SK-MEL-5 (cell line): ENCODE measurements at regions of chr10 and their contacts with region 1.

Region 1: GRCh38 chr10:72124989-72125388 is 36.6 kb upstream of the SPOCK2 start:
- DNase-seq: no peak

Region 2: GRCh38 chr10:71939861-71940474 is 185.0 kb before region 1 on chr10:
- in situ Hi-C with region 1: no loop called
- DNase-seq: no peak

Region 3: DNA sequence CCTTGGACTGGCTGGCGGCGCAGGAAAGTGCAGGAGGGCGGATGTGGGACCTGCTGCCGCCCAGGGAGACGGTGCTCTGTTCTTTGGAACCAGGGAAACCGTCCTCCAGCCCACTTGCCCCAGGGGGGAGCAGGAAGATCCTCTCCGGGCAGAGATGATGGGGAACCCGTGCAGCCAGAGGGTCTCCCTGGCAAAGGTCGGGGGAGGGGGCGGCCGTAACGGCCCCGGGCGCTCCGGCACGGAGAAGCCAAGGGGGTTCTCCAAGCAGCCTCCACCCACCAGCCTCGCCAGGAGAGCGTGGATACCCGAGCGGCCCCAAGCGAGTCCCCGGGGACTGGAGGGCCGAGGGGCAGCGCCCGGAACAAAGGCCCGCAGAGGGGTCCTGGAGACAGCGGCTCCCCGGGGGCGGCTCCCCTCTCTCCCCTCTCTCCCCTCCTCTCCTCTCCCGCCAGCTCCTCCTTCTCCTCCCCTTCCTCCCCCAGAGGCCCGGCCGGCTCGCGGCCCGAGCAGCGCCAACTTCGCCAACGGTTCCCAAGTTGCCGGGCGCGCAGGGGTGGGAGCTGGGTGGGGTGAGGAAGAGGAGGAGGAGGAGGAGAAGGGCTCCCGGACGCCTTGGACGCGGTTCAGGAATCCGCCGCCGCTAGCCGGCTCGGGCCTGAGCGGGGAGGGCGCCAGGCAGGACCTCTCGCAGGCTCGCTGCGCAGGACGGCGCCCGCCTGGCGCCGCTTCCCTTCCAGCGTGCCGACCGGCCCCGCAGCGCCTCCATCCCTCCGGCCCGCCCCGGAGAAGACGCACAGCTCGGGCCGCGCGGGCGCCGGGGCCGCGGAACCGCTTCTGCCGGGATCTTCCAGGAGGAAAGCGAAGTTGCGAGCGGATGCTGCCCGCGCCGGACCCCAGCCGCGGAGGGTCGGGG is 161.0 kb before region 1 on chr10 and contains the start of gene CHST3:
- in situ Hi-C with region 1: no loop called
- DNase-seq: no peak
- total RNA-seq, gene CHST3: 3.1 and 3.5 TPM in 2 replicates

Region 4: DNA sequence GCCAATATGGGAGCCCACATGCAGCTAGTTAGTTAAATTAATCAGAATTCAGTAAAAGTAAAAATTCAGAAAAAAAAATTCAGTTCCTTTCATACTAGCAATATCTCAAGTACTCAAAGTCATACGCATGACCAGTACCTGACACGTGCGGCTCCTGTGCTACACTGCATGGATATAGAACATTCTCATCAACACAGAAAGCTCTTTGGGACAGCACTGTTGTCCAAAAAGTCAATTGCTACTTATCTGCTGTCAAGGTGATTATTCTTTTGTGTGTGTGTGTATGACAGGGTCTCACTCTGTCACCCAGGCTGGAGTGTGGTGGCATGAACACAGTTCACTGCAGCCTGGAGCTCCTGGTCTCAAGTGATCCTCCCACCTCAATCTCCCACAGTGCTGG is 75.9 kb after region 1 on chr10:
- in situ Hi-C with region 1: no loop called
- DNase-seq: no peak

Region 5: GRCh38 chr10:72331601-72332422 is 206.8 kb after region 1 on chr10:
- in situ Hi-C with region 1: loop called (anchors 25 kb)
- DNase-seq: no peak